ENCODE measurements at regions of chr1 and their contacts with region 1.

Region 1: GRCh38 chr1:12604114-12604874 is 13.7 kb downstream of the DHRS3 start:
- DNase-seq: peak; percentile 91 to 97 (median 94)
- ATAC-seq: peak; percentile 91
- H3K4me3 ChIP-seq: no peak overlapping the region
- H3K27ac ChIP-seq: peak overlapping the region; percentile 81
- H3K4me1 ChIP-seq: peaks cover 38 to 43% of the 10 kb centered on the region in 2 experiments
- H3K27me3 ChIP-seq: no peaks in the 10 kb centered on the region
- CTCF ChIP-seq: 0 out of 6 replicates have a peak, but pooled peaks of 1 of the 3 experiments have one; percentile 8
- EP300 ChIP-seq: peak; percentile 99
- POLR2A ChIP-seq: no peak
- RAD21 ChIP-seq: peak; percentile 19 to 34; a peak in 3 of 4 replicates

Region 2: GRCh38 chr1:12407050-12407961 is 197.0 kb before region 1 on chr1:
- CTCF ChIA-PET with region 1: no interaction called
- POLR2A ChIA-PET with region 1: interaction called, 4 read pairs
- in situ Hi-C with region 1: no loop called
- intact Hi-C with region 1: loop called (anchors 5 kb)
- DNase-seq: peak; percentile 39 to 81 (median 60)
- ATAC-seq: peak; percentile 87
- H3K4me3 ChIP-seq: no peak overlapping the region
- H3K27ac ChIP-seq: peak overlapping the region; percentile 60
- H3K4me1 ChIP-seq: peaks cover 11 to 33% of the 10 kb centered on the region in 2 experiments; a peak in 4 of 5 replicates
- H3K27me3 ChIP-seq: no peaks in the 10 kb centered on the region
- CTCF ChIP-seq: peak; percentile 47 to 76 (median 60); a peak in 5 of 6 replicates
- EP300 ChIP-seq: no peak; the same call in 1 of the 2 replicates
- POLR2A ChIP-seq: no peak
- RAD21 ChIP-seq: peak; percentile 83 to 89

Region 3: GRCh38 chr1:12448746-12449177 is 155.5 kb before region 1 on chr1:
- CTCF ChIA-PET with region 1: no interaction called
- POLR2A ChIA-PET with region 1: no interaction called
- in situ Hi-C with region 1: no loop called
- intact Hi-C with region 1: loop called (anchors 2 kb)
- DNase-seq: peak; percentile 76 to 99 (median 85)
- ATAC-seq: peak; percentile 94
- H3K4me3 ChIP-seq: no peak overlapping the region
- H3K27ac ChIP-seq: peak overlapping the region; percentile 95
- H3K4me1 ChIP-seq: peaks cover 29 to 87% of the 10 kb centered on the region in 2 experiments
- H3K27me3 ChIP-seq: no peaks in the 10 kb centered on the region
- CTCF ChIP-seq: 0 out of 6 replicates have a peak, but pooled peaks of 1 of the 3 experiments have one; percentile 6
- EP300 ChIP-seq: peak; percentile 100
- POLR2A ChIP-seq: no peak
- RAD21 ChIP-seq: peak; percentile 33 to 52; a peak in 2 of 4 replicates

Region 4: GRCh38 chr1:12591267-12591938 is 12.9 kb before region 1 on chr1:
- CTCF ChIA-PET with region 1: no interaction called
- POLR2A ChIA-PET with region 1: interaction called, 10 read pairs
- in situ Hi-C with region 1: no loop called
- intact Hi-C with region 1: no loop called
- DNase-seq: no peak
- ATAC-seq: no peak
- H3K4me3 ChIP-seq: no peak overlapping the region
- H3K27ac ChIP-seq: peak overlapping the region; percentile 19; the same call in 1 of the 3 replicates
- H3K4me1 ChIP-seq: peaks cover 6 to 22% of the 10 kb centered on the region in 2 experiments; a peak in 4 of 5 replicates
- H3K27me3 ChIP-seq: no peaks in the 10 kb centered on the region
- CTCF ChIP-seq: no peak
- EP300 ChIP-seq: no peak
- POLR2A ChIP-seq: no peak
- RAD21 ChIP-seq: no peak

Region 5: DNA sequence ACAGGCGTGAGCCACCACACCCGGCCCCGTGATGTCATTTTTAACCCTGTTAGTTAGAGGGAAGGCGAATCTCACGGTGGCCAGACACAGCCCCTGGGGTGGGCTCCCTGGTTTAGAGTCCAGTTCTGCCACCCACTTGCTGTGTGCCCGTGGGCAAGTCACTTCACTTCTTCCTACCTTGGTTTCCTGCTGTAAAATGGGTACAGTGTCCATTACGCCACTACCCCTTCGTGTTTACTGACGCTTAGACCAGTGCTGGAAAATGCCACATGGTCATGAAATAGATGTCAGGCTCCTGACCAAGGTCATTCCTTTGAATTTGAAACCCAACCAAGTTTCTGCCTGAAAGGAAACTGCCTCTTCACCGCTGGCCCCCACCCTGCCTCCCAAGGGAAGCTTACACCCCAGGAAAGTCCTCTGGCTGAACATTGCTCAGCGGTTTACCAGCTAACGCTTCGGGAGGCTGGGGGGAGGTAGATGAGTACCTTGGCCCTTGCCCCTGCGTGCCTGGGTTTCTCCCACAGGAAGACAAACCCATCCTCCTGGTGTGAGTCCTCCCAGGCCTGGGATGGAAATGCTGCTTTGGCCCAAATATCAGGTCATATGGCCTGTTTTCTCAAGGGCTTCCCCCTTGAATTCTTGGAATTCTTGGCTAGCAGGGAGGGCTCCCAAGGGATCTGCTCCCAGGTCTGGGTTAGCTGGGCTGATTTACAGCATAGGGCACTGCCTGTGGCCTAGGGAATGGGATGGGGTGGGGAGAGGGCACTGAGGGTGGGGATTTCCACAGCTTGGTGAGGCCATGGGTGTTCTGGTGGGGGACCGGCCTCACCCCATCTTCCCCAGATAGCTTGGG is 32.0 kb after region 1 on chr1:
- CTCF ChIA-PET with region 1: no interaction called
- POLR2A ChIA-PET with region 1: no interaction called
- in situ Hi-C with region 1: no loop called
- intact Hi-C with region 1: no loop called
- DNase-seq: no peak
- ATAC-seq: no peak
- H3K4me3 ChIP-seq: no peak overlapping the region
- H3K27ac ChIP-seq: no peak overlapping the region
- H3K4me1 ChIP-seq: peaks cover 3 to 5% of the 10 kb centered on the region in 2 experiments; a peak in 3 of 5 replicates
- H3K27me3 ChIP-seq: 0 out of 5 replicates have a peak, but pooled peaks cover 1 to 2% of the 10 kb centered on the region in 2 experiments
- CTCF ChIP-seq: no peak
- EP300 ChIP-seq: no peak
- POLR2A ChIP-seq: no peak
- RAD21 ChIP-seq: no peak

Region 6: GRCh38 chr1:12722626-12723025 is 118.3 kb after region 1 on chr1:
- CTCF ChIA-PET with region 1: no interaction called
- POLR2A ChIA-PET with region 1: no interaction called
- in situ Hi-C with region 1: no loop called
- intact Hi-C with region 1: no loop called
- DNase-seq: no peak
- ATAC-seq: no peak
- H3K4me3 ChIP-seq: no peak overlapping the region
- H3K27ac ChIP-seq: no peak overlapping the region
- H3K4me1 ChIP-seq: no peaks in the 10 kb centered on the region
- H3K27me3 ChIP-seq: peaks cover 12 to 55% of the 10 kb centered on the region in 2 experiments; a peak in 4 of 5 replicates
- CTCF ChIP-seq: no peak
- EP300 ChIP-seq: no peak
- POLR2A ChIP-seq: no peak
- RAD21 ChIP-seq: no peak